Transverse colon (tissue), 4 donors: ENCODE measurements at regions of chr11 and their contacts with region 1.

Region 1: GRCh38 chr11:131674051-131674755 is 303.8 kb downstream of the NTM start:
- DNase-seq: peak; percentile 56
- H3K4me3 ChIP-seq: no peak overlapping the region
- H3K27ac ChIP-seq: no peak overlapping the region
- H3K4me1 ChIP-seq: peaks cover 0 to 4% (median 0%) of the 10 kb centered on the region in 4 donors
- H3K27me3 ChIP-seq: no peaks in the 10 kb centered on the region
- CTCF ChIP-seq: peak; percentile 72 to 90 (median 89)
- EP300 ChIP-seq: no peak
- POLR2A ChIP-seq: no peak

Region 2: DNA sequence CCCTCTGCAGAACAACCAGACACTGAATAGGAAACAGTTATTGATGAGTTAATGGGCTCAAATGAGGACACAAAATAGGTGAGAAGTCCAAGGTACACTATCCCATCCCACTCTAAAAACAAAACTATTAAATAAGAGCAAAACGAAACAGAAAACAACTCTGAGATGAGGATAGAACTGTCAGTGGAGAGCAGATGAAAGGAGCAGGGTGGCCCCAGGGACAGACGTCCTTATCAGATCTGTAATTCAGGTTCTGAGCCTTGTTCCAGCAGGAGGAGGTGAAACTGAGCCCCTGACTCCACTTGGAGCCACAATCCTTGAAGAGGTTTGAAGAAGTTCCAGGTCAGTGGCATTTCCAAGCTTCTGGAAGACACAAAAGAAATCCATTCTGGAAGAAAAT is 749.4 kb before region 1 on chr11:
- in situ Hi-C with region 1: loop called in 1 of 4 experiments (anchors 10 kb)
- intact Hi-C with region 1: loop called (anchors 5 kb)
- DNase-seq: no peak
- H3K4me3 ChIP-seq: no peak overlapping the region
- H3K27ac ChIP-seq: no peak overlapping the region
- H3K4me1 ChIP-seq: no peaks in the 10 kb centered on the region
- H3K27me3 ChIP-seq: no peaks in the 10 kb centered on the region
- CTCF ChIP-seq: no peak
- EP300 ChIP-seq: no peak
- POLR2A ChIP-seq: no peak